Activated CD4-positive, alpha-beta T cell treated with anti-CD3 and anti-CD28 coated beads for 36 hours (primary cell): ENCODE measurements at regions of chrX and their contacts with region 1.

Region 1: DNA sequence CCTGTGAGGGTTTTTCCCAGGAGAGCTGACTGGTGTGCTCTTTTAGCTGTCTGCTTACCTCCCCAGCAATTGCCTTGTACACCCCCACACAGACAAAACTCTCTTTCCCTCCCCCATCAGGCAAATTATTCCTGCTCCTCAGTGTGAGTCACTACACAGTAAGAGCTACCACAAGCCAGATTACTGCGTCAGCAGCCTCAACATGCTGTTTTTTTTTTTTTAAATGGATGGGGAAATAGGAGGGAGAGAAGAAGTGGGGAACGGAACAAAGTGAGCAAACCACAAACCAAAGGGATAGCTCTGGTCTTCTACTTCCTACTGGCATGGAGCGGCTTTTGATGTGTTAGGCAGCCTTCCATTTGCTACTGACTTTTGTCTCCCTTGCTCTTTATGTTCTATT is 107.5 kb upstream of the ACSL4 start:
- DNase-seq: peak; percentile 28
- ATAC-seq: peak; percentile 50
- H3K4me3 Mint-ChIP-seq: no peak overlapping the region
- H3K27ac Mint-ChIP-seq: no peak overlapping the region
- H3K4me1 Mint-ChIP-seq: peaks cover 12% of the 10 kb centered on the region
- H3K27me3 Mint-ChIP-seq: no peaks in the 10 kb centered on the region

Region 2: GRCh38 chrX:109709129-109709631 is 131.4 kb before region 1 on chrX:
- CTCF ChIA-PET with region 1: interaction called, 16 read pairs
- POLR2A ChIA-PET with region 1: no interaction called
- intact Hi-C with region 1: loop called in 1 of 2 experiments (anchors 1 kb)
- DNase-seq: no peak
- ATAC-seq: peak; percentile 68
- H3K4me3 Mint-ChIP-seq: peak overlapping the region; percentile 43
- H3K27ac Mint-ChIP-seq: peak overlapping the region; percentile 84
- H3K4me1 Mint-ChIP-seq: peaks cover 72% of the 10 kb centered on the region
- H3K27me3 Mint-ChIP-seq: no peaks in the 10 kb centered on the region

Region 3: GRCh38 chrX:109782994-109783700 is 57.4 kb before region 1 on chrX:
- CTCF ChIA-PET with region 1: no interaction called
- POLR2A ChIA-PET with region 1: no interaction called
- intact Hi-C with region 1: loop called (anchors 1 to 2 kb)
- DNase-seq: peak; percentile 17
- ATAC-seq: peak; percentile 84
- H3K4me3 Mint-ChIP-seq: peak overlapping the region; percentile 53
- H3K27ac Mint-ChIP-seq: peak overlapping the region; percentile 96
- H3K4me1 Mint-ChIP-seq: peaks cover 16% of the 10 kb centered on the region
- H3K27me3 Mint-ChIP-seq: no peaks in the 10 kb centered on the region

Region 4: DNA sequence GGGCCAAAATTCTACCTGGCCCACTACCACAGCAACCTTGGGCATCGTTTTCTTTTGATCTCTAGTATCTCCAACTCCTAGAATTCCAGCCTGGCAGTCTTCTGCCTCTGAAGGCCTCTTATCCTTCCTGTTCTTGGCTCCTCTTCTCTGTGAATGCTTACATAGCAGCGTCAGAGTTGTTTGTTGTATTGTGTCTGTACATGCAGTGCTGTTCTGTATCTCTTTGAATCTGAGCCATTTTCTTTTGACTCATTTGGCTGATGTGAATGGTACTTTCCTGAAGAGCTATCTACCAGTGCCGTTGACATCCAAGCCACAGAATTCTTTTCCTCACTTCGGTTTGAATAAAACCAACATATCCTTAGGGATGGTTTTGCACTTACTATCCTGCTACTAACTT is 241.6 kb after region 1 on chrX:
- CTCF ChIA-PET with region 1: no interaction called
- POLR2A ChIA-PET with region 1: no interaction called
- intact Hi-C with region 1: no loop called
- DNase-seq: no peak
- ATAC-seq: no peak
- H3K4me3 Mint-ChIP-seq: no peak overlapping the region
- H3K27ac Mint-ChIP-seq: no peak overlapping the region
- H3K4me1 Mint-ChIP-seq: peaks cover 15% of the 10 kb centered on the region
- H3K27me3 Mint-ChIP-seq: no peaks in the 10 kb centered on the region